ENCODE measurements at regions of chr3 and their contacts with region 1.

Region 1: GRCh38 chr3:192816351-192816750 is 89.0 kb upstream of the FGF12 start:
- DNase-seq: peak; percentile 29 to 67
- H3K4me3 ChIP-seq: no peak overlapping the region
- H3K27ac ChIP-seq: no peak overlapping the region
- H3K4me1 ChIP-seq: peaks cover 19% of the 10 kb centered on the region
- H3K27me3 ChIP-seq: no peaks in the 10 kb centered on the region
- CTCF ChIP-seq: peak; percentile 96

Region 2: GRCh38 chr3:192155194-192155593 is 661.2 kb before region 1 on chr3:
- CTCF ChIA-PET with region 1: no interaction called
- POLR2A ChIA-PET with region 1: no interaction called
- intact Hi-C with region 1: no loop called
- DNase-seq: no peak
- H3K4me3 ChIP-seq: peak overlapping the region; percentile 51
- H3K27ac ChIP-seq: no peak overlapping the region
- H3K4me1 ChIP-seq: peaks cover 7% of the 10 kb centered on the region
- H3K27me3 ChIP-seq: no peaks in the 10 kb centered on the region
- CTCF ChIP-seq: no peak

Region 3: GRCh38 chr3:192336287-192336686 is 480.1 kb before region 1 on chr3:
- CTCF ChIA-PET with region 1: no interaction called
- POLR2A ChIA-PET with region 1: no interaction called
- intact Hi-C with region 1: no loop called
- DNase-seq: no peak
- H3K4me3 ChIP-seq: no peak overlapping the region
- H3K27ac ChIP-seq: no peak overlapping the region
- H3K4me1 ChIP-seq: no peaks in the 10 kb centered on the region
- H3K27me3 ChIP-seq: no peaks in the 10 kb centered on the region
- CTCF ChIP-seq: no peak; the same call in 1 of the 2 replicates

Region 4: GRCh38 chr3:192851821-192852424 is 35.6 kb after region 1 on chr3:
- CTCF ChIA-PET with region 1: no interaction called
- POLR2A ChIA-PET with region 1: no interaction called
- intact Hi-C with region 1: loop called (anchors 1 kb)
- DNase-seq: peak; percentile 99 to 100
- H3K4me3 ChIP-seq: no peak overlapping the region
- H3K27ac ChIP-seq: peak overlapping the region; percentile 17
- H3K4me1 ChIP-seq: peaks cover 27% of the 10 kb centered on the region
- H3K27me3 ChIP-seq: no peaks in the 10 kb centered on the region
- CTCF ChIP-seq: no peak

Region 5: GRCh38 chr3:192906949-192907348 is 90.6 kb after region 1 on chr3:
- CTCF ChIA-PET with region 1: interaction called, 11 read pairs
- POLR2A ChIA-PET with region 1: no interaction called
- intact Hi-C with region 1: no loop called
- DNase-seq: peak in 1 of 2 experiments; percentile 84
- H3K4me3 ChIP-seq: no peak overlapping the region
- H3K27ac ChIP-seq: peak overlapping the region; percentile 89
- H3K4me1 ChIP-seq: peaks cover 58% of the 10 kb centered on the region
- H3K27me3 ChIP-seq: no peaks in the 10 kb centered on the region
- CTCF ChIP-seq: no peak

Region 6: DNA sequence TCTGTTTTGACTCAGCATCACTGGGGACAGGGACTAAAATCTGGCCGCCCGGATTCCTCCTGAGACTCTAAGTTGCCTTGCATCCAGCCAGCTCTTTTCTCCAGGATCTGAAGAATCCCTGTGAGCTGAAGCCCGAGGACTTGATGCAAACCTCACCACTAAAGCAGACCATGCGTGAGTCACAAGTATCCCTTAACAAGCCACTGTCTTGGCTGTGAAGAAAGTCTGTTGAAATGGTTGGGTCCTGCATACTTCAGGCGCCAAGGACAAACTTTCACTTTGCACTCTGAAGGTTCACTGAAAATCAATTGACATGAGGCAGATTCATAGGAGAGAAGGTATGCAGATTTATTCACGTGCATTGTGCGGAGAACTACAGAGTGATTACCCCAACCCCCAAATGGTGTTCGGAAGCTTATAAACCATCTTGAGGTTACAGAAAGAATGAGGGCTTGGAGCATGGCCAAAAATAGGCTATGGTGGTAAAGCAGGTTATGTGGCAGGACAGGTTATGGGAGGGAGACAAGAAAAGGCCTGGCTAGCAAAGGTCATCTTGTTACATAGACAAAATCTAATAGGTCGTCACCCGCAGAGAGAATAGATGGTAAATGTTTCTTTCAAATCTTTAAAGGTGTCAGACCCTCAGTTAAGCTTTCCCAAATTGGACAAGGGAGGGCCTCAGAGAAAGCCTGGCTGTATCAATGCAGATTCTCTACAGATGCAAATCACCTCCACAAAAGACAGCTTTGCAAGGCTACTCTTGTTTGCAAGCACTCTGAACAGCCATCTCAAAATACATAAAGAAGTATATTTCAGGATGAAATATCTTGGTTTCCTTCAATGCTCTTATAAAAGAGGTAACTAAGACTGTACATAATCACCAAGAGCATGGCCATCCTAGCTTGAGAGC is 298.3 kb after region 1 on chr3:
- CTCF ChIA-PET with region 1: no interaction called
- POLR2A ChIA-PET with region 1: no interaction called
- intact Hi-C with region 1: loop called (anchors 5 kb)
- DNase-seq: peak; percentile 51 to 76
- H3K4me3 ChIP-seq: peak overlapping the region; percentile 22; the same call in 1 of the 2 replicates
- H3K27ac ChIP-seq: no peak overlapping the region
- H3K4me1 ChIP-seq: 0 out of 2 replicates have a peak, but pooled peaks cover 11% of the 10 kb centered on the region
- H3K27me3 ChIP-seq: no peaks in the 10 kb centered on the region
- CTCF ChIP-seq: no peak

Region 7: DNA sequence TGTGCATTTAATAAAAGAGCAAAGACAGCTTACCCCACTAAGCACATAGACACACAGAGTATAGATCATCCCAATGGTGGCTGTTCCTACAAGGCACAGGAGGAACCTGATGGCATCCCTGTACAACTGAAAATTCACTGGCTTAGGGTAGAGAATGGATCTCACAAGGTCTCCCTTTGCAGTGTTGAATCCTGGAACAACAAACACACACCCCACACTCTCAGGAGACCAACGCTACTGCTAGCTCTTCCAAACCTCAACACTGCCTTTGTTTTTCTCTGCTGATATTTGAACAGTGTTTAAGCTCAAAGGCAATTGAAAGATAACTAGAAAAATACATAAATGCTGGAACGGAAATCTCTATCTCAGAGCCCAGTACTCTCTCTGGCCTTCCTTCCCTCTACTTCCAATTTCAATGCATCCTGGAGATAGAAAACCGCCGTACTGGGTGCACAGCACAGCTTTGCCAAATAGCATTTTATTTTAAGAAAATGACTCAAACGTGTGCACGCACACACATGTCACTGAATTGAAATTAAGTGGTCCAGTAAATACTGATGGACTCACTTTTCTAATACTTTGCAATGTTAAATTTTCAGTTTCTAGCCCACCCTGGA is 649.7 kb after region 1 on chr3:
- CTCF ChIA-PET with region 1: no interaction called
- POLR2A ChIA-PET with region 1: no interaction called
- intact Hi-C with region 1: loop called (anchors 2 kb)
- DNase-seq: no peak
- H3K4me3 ChIP-seq: no peak overlapping the region
- H3K27ac ChIP-seq: no peak overlapping the region
- H3K4me1 ChIP-seq: no peaks in the 10 kb centered on the region
- H3K27me3 ChIP-seq: peaks cover 18% of the 10 kb centered on the region; the same call in 1 of the 2 replicates
- CTCF ChIP-seq: no peak

Region 8: GRCh38 chr3:194404365-194405140 is 1588.2 kb after region 1 on chr3:
- CTCF ChIA-PET with region 1: interaction called, 3 read pairs
- POLR2A ChIA-PET with region 1: no interaction called
- intact Hi-C with region 1: loop called (anchors 5 kb)
- DNase-seq: peak; percentile 38 to 56
- H3K4me3 ChIP-seq: no peak overlapping the region
- H3K27ac ChIP-seq: no peak overlapping the region
- H3K4me1 ChIP-seq: no peaks in the 10 kb centered on the region
- H3K27me3 ChIP-seq: no peaks in the 10 kb centered on the region
- CTCF ChIP-seq: peak; percentile 96